WTC11 (cell line): ENCODE measurements at regions of chr2 and their contacts with region 1.

Region 1: GRCh38 chr2:202588647-202589581 is 45.9 kb upstream of the FAM117B start:
- DNase-seq: peak; percentile 71
- ATAC-seq: peak; percentile 97
- H3K4me3 Mint-ChIP-seq: peak overlapping the region; percentile 12
- H3K27ac Mint-ChIP-seq: no peak overlapping the region
- H3K4me1 Mint-ChIP-seq: peaks cover 17% of the 10 kb centered on the region
- H3K27me3 Mint-ChIP-seq: no peaks in the 10 kb centered on the region; the same call in 1 of the 2 replicates
- CTCF ChIP-seq: peak; percentile 84

Region 2: DNA sequence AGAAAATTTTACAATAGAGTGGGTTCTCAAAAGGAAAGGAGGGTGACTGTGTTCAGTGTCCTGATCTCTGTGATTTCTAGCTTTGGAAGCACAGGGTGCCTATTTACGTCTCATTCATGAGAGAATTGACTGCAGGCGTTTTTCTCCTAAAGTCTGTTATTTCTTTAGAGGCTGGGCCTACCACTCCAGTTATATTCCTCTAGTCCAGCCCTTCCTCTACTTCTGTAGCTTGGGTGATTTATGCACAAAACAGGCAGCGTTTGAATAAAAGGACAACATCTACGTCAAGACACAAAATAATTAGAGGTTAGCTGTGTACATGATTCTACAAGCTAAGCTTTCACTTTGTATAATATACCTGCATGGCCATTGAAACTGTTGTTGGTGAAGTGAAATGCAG is 13.4 kb after region 1 on chr2:
- CTCF ChIA-PET with region 1: interaction called, 14 read pairs
- POLR2A ChIA-PET with region 1: no interaction called
- DNase-seq: no peak
- ATAC-seq: no peak
- H3K4me3 Mint-ChIP-seq: no peak overlapping the region
- H3K27ac Mint-ChIP-seq: no peak overlapping the region
- H3K4me1 Mint-ChIP-seq: no peaks in the 10 kb centered on the region
- H3K27me3 Mint-ChIP-seq: no peaks in the 10 kb centered on the region
- CTCF ChIP-seq: no peak

Region 3: GRCh38 chr2:202634556-202635427 is 45.9 kb after region 1 on chr2 and contains the start of gene FAM117B:
- CTCF ChIA-PET with region 1: interaction called, 47 read pairs
- POLR2A ChIA-PET with region 1: interaction called, 10 read pairs
- DNase-seq: peak; percentile 99
- ATAC-seq: peak; percentile 95
- H3K4me3 Mint-ChIP-seq: peak within 1 kb of the TSS; percentile 93
- H3K27ac Mint-ChIP-seq: peak within 1 kb of the TSS; percentile 95
- H3K4me1 Mint-ChIP-seq: peaks cover 30% of the 10 kb centered on the region
- H3K27me3 Mint-ChIP-seq: no peaks in the 10 kb centered on the region
- CTCF ChIP-seq: no peak
- total RNA-seq, gene FAM117B: 18.1 to 23.2 TPM (median 23.1 TPM) in 3 replicates